HCT116 (cell line): ENCODE measurements at regions of chr4 and their contacts with region 1.

Region 1: DNA sequence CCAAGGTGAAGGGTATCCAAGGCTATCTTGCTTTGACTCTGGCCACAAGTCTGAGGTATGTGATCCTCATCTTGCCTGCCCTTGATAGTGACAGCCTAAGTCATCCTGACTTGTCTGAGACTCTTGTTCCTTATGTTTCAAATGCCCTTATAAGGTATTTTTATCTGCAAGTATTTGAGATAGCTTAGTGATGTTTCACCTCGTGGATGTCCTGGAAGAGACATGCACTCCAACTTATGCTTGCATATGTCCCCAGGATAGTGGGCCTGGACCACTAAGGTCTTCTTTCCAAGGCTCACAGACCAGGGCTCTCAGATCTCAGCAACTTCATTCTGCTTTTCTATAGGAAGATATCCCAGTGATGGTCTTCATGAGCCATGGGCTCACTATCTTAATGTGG is 120.5 kb upstream of the WDR1 start:
- DNase-seq: no peak
- ATAC-seq: no peak
- H3K4me3 ChIP-seq: no peak overlapping the region
- H3K27ac ChIP-seq: no peak overlapping the region
- H3K4me1 ChIP-seq: no peaks in the 10 kb centered on the region
- H3K27me3 ChIP-seq: peaks cover 50% of the 10 kb centered on the region
- CTCF ChIP-seq: no peak
- POLR2A ChIP-seq: no peak
- RAD21 ChIP-seq: no peak

Region 2: GRCh38 chr4:10204401-10205058 is 32.6 kb before region 1 on chr4:
- CTCF ChIA-PET with region 1: no interaction called
- POLR2A ChIA-PET with region 1: no interaction called
- RAD21 ChIA-PET with region 1: no interaction called
- intact Hi-C with region 1: loop called (anchors 1 kb)
- DNase-seq: no peak
- ATAC-seq: no peak
- H3K4me3 ChIP-seq: no peak overlapping the region
- H3K27ac ChIP-seq: no peak overlapping the region
- H3K4me1 ChIP-seq: no peaks in the 10 kb centered on the region
- H3K27me3 ChIP-seq: peaks cover 20% of the 10 kb centered on the region; the same call in 1 of the 2 replicates
- CTCF ChIP-seq: no peak
- POLR2A ChIP-seq: no peak
- RAD21 ChIP-seq: no peak